Heart right ventricle (tissue), 16 donors: ENCODE measurements at regions of chr3 and their contacts with region 1.

Region 1: DNA sequence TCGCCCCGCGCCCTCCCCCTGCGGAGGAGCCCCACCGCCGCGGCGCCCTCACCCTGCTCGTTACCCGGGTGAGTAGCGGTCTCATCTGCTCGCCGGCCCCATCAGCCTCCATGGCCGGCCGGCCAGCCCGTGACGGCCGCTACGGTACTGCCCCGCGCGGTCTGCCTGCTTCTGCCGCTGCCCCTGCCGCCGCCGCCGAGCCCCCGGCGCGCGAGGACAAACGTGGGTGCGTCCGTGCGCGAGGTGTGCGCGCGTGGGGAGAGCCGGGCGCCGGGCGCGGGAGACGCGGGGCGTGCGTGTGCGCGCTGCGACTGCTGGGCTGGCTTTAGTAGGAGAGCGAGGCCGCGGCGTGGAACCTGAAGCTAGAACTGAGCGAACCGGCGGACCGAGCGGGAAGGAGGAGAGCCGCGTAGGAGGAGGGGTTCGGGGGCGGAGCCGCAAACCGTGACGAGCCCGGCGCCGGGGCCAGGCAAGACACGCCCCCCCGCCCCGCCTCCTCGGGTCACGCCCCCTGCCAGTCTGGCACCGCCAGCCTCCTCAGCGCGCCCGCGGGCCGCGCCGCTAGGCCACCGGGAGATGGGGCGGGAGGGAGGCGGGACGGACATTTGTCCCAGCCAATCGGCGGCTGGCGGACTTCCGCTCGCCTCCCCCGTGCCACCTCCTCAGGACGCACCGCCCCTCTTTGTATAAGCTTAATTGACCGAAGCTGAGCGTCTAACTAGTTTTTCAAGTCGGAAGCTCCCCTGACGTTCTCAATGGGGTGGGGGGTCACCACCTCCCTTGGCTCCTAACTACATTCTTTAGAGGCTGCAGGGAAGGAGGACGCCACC is at the start of gene SLC4A7:
- DNase-seq: peak; percentile 97 to 99
- ATAC-seq: peak; percentile 96 to 100 (median 98)
- H3K4me3 ChIP-seq: peak within 1 kb of the TSS; percentile 49 to 91 (median 80)
- H3K27ac ChIP-seq: peak within 1 kb of the TSS; percentile 83 to 97 (median 93)
- H3K4me1 ChIP-seq: peaks cover 0 to 47% (median 23%) of the 10 kb centered on the region in 9 donors
- H3K27me3 ChIP-seq: no peaks in the 10 kb centered on the region
- CTCF ChIP-seq: no peak
- total RNA-seq, gene SLC4A7: 8.0 to 18.7 (median 13.1) TPM

Region 2: DNA sequence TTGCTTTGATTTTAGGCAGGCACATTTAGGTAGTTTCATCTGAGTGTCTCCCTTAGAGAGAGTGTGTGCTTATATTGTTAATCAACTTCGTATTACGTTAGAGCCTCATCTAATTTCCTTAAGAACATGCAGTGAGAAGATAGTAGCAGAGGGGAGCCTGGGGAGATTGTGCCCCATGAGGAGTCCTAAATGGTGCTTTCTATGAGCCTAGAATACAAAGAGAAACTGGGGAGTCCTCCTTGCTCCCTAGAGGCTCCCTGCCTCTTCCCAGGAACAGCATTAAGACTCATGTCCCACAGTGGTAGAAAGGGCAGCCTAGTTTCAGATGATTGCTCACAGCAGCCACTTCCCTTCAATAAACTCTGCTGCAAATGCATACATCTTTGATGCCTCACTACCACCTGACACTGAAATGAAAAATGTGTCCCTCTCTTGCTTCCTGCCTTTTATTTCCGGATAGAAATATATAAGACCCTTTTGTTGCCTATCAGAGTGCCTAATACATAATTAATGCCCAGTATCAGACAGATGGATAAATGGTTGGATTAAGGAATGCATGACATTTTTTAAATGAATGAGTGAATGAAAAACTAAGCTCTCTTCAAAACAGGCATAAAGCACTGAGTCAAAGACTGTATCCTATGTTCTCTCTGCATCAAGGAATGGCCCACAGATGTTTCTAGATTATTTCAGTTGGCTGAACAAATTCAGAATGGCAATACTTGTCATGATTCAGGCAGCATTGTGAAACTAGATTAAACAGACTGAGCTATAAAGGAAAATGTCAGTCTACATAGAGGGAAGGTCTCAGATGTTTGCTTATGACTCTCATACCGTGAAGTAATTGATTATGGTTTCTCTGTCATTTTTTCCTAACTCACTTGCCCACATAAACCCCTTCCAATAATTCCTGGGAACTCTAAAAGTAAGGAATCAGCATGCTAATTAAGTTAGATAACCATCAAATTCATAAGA is 499.5 kb before region 1 on chr3:
- intact Hi-C with region 1: no loop called
- DNase-seq: no peak
- ATAC-seq: no peak
- H3K4me3 ChIP-seq: no peak overlapping the region
- H3K27ac ChIP-seq: no peak overlapping the region
- H3K4me1 ChIP-seq: no peaks in the 10 kb centered on the region
- H3K27me3 ChIP-seq: no peaks in the 10 kb centered on the region
- CTCF ChIP-seq: no peak

Region 3: GRCh38 chr3:27345492-27345891 is 138.7 kb before region 1 on chr3:
- intact Hi-C with region 1: no loop called
- DNase-seq: no peak
- ATAC-seq: peak in 2 of 8 donors; percentile 32 to 59
- H3K4me3 ChIP-seq: peak overlapping the region in 5 of 10 donors; percentile 6 to 19 (median 13)
- H3K27ac ChIP-seq: peak overlapping the region; percentile 28 to 83 (median 68)
- H3K4me1 ChIP-seq: peaks cover 0 to 42% (median 7%) of the 10 kb centered on the region in 9 donors
- H3K27me3 ChIP-seq: no peaks in the 10 kb centered on the region
- CTCF ChIP-seq: no peak

Region 4: DNA sequence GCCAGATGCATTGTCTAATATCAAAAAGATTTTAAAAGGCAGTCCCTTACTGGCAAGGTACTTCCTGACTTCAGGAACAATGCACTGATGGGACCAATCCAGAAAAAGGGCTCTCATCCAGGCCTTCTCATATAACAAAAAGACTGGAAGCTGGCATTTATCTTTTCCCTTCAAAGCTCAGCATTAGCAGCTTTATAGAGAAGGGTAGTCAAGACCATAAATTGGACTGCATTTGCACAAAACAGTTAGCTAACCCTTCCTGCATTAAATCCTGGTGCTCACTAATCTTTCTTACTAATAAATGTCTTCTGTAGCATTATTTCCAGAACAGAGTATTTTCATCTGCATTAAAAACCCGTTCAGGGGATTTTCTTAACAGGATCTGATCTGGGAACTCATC is 69.0 kb before region 1 on chr3:
- intact Hi-C with region 1: no loop called
- DNase-seq: no peak
- ATAC-seq: no peak
- H3K4me3 ChIP-seq: no peak overlapping the region
- H3K27ac ChIP-seq: no peak overlapping the region
- H3K4me1 ChIP-seq: peaks cover 0 to 11% (median 0%) of the 10 kb centered on the region in 9 donors
- H3K27me3 ChIP-seq: no peaks in the 10 kb centered on the region
- CTCF ChIP-seq: no peak

Region 5: GRCh38 chr3:27521179-27521871 is 37.1 kb after region 1 on chr3:
- intact Hi-C with region 1: loop called in 3 of 10 experiments (anchors 5 kb)
- DNase-seq: peak in 1 of 2 donors; percentile 37
- ATAC-seq: peak; percentile 78 to 95 (median 87)
- H3K4me3 ChIP-seq: no peak overlapping the region
- H3K27ac ChIP-seq: peak overlapping the region in 8 of 10 donors; percentile 13 to 65 (median 44)
- H3K4me1 ChIP-seq: peaks cover 0 to 42% (median 25%) of the 10 kb centered on the region in 9 donors
- H3K27me3 ChIP-seq: no peaks in the 10 kb centered on the region
- CTCF ChIP-seq: no peak

Region 6: DNA sequence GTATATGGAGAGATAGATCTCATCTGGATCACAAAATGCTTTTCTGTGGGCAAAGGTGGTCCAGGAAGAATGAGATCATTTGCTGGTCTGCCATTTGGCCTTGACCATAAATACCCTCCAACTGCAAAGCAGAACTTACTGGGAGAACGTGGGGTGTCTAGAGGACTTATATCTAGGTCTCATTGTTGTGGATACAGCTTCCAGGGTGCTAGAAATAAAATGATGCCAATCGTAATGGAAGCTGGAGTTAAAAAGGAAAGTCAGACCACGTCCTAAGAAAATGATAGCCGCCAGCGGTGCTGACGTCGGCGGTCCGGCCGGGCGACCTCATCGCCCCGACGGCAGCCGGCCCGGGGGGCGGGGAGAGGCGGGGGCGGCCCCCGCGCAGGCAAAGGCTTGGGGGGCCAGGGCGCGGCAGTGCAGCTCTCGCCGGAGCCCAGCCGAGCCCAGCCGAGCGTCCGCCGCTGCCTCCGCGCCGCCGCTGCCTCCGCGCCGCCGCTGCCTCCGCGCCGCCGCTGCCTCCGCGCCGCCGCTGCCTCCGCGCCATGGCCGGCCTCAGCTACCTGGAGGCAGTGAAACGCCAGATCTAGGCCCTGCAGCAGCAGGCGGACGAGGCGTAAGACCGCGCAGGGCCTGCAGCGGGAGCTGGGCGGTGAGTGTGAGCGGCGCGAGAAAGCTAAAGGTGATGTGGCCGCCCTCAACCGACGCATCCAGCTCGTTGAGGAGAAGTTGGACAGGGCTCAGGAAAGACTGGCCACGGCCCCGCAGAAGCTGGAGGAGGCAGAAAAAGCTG is 148.4 kb after region 1 on chr3:
- intact Hi-C with region 1: loop called in 3 of 10 experiments (anchors 10 kb)
- DNase-seq: peak; percentile 28 to 57
- ATAC-seq: peak; percentile 64 to 93 (median 85)
- H3K4me3 ChIP-seq: peak overlapping the region; percentile 24 to 77 (median 61)
- H3K27ac ChIP-seq: peak overlapping the region; percentile 31 to 91 (median 78)
- H3K4me1 ChIP-seq: peaks cover 0 to 22% (median 0%) of the 10 kb centered on the region in 9 donors
- H3K27me3 ChIP-seq: peaks cover 0 to 3% (median 0%) of the 10 kb centered on the region in 7 donors
- CTCF ChIP-seq: no peak

Region 7: DNA sequence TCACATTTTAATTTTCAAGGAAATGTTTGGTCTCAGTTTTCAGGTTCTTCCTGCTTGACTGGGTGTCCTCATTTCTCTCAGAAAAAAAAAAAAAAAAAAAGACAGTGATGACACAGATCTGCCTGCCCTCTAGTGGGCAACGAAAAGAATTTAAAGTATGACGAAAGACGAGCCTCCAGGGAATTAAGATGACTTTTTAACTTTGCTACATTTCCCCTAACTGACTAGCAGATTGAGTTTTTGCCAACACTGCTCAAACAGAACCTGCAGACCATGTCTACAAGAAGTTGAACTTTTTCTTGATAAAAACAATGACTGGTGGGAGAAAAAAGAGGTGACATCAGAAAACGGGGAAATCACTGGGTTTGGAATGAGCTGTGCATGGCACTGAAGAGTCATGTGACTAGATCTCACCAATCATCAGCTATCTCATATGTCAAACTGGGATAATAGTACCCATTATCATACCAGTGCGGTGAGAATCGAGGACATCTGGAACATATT is 197.1 kb after region 1 on chr3:
- intact Hi-C with region 1: loop called in 1 of 10 experiments (anchors 10 kb)
- DNase-seq: peak in 1 of 2 donors; percentile 38
- ATAC-seq: peak in 7 of 8 donors; percentile 20 to 67 (median 51)
- H3K4me3 ChIP-seq: peak overlapping the region in 2 of 10 donors; percentile 19 to 26
- H3K27ac ChIP-seq: peak overlapping the region in 2 of 10 donors; percentile 48 to 51
- H3K4me1 ChIP-seq: peaks cover 0 to 13% (median 5%) of the 10 kb centered on the region in 9 donors
- H3K27me3 ChIP-seq: no peaks in the 10 kb centered on the region
- CTCF ChIP-seq: peak; percentile 31 to 71 (median 65)